T-cell (primary cell): ENCODE measurements at regions of chr15 and their contacts with region 1.

Region 1: DNA sequence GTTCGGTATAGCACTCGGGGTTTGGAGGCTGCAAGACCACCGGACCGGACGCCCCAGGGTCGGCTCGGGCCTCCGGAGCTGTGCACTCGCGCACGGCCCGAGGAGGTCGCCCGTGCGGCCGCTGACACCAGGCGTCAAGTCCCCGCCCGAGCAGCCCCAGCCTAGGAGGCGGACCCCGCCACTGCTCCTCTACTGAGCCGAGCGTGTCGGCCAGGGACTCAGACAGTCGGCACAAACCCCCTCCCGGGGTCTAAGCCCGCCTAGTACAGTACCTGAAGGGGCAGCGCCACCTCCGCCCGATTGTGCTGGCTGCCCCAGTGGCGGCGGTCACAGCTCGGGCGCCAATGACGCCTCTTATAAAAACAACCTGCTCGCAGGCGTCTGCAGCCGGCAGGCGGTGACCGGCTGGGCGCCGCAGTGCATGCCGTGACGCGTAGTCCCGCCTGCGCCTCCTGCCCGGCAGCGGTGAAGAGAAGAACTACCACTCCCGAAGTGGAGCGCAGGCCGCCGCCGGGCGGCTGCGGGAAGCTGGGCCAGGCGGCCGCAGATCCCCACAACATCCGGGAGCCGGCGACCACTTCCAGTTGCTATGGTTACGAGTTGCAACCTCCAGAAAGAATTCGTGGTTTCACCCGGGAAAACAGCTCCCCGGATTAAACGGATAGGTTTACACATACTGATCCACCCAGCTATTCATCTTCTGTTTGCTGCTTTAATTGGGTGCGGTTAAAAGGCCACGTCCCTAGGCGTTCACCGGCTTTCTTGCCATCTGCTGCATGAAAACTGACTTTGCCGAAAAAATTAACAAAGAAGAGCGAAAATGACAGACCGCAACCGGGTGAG is at the starts of genes CCPG1 and PIERCE2:
- DNase-seq: peak; percentile 72 to 92 (median 80)
- ATAC-seq: peak; percentile 93 to 97 (median 95)
- H3K4me3 ChIP-seq: peak within 1 kb of the TSS; percentile 79 to 88
- H3K4me3 Mint-ChIP-seq: peak within 1 kb of the TSS; percentile 84 to 96 (median 91)
- H3K27ac ChIP-seq: peak within 1 kb of the TSS; percentile 79
- H3K27ac Mint-ChIP-seq: peak within 1 kb of the TSS; percentile 84 to 89
- H3K4me1 ChIP-seq: peaks cover 5 to 30% of the 10 kb centered on the region in 2 experiments
- H3K4me1 Mint-ChIP-seq: peaks cover 33 to 39% (median 38%) of the 10 kb centered on the region in 3 donors
- H3K27me3 ChIP-seq: no peaks in the 10 kb centered on the region
- H3K27me3 Mint-ChIP-seq: no peaks in the 10 kb centered on the region
- total RNA-seq, gene CCPG1: 21.3 to 32.5 (median 25.6) TPM
- total RNA-seq, gene PIERCE2: not detected

Region 2: GRCh38 chr15:55344206-55344605 is 64.0 kb before region 1 on chr15:
- CTCF ChIA-PET with region 1: interaction called in 1 of 2 experiments, 3 read pairs
- POLR2A ChIA-PET with region 1: interaction called in 1 of 2 experiments, 11 read pairs
- DNase-seq: no peak
- ATAC-seq: no peak
- H3K4me3 ChIP-seq: no peak overlapping the region
- H3K4me3 Mint-ChIP-seq: no peak overlapping the region
- H3K27ac ChIP-seq: no peak overlapping the region
- H3K27ac Mint-ChIP-seq: peak overlapping the region; percentile 17 to 35
- H3K4me1 ChIP-seq: no peaks in the 10 kb centered on the region
- H3K4me1 Mint-ChIP-seq: no peaks in the 10 kb centered on the region
- H3K27me3 ChIP-seq: no peaks in the 10 kb centered on the region
- H3K27me3 Mint-ChIP-seq: no peaks in the 10 kb centered on the region

Region 3: DNA sequence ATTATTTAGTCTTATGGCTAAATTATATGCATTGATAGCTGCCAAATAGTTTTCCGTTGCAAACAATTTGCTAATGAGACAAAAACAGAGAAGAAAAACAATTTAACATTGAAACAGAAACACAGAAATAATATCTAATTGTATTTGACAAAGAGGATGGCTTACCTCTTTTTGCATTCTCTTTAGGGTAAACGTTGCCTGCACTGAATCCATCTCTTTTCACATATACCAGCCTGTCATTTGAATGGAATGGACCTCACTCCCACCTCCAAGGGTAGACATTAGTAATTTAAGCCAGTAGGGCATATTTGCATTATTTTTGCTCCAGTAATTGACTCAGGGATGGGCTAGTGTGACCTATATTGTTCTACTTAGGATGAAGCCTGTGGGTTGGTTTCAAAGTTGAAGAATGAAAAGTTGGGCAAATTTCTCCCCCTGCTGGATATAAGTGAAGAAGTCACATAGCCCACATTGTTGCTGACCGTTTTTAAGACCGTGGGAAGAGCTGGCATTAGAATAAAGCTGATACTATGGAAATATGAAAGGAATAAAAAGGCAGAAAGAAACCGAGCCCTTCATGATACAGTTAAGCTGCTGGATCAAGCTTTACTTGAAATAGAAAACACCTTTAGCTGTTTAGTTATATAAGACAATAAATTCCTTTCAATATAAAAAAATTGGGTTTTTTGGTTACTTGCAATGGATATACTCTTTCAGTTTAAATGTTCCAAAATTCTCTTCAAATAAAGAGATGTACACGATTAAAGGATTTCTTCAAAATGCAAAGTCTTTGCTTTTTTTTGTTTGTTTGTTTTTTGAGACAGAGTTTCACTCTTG is 27.0 kb after region 1 on chr15:
- CTCF ChIA-PET with region 1: interaction called, 5 to 15 read pairs
- POLR2A ChIA-PET with region 1: interaction called in 1 of 2 experiments, 3 read pairs
- DNase-seq: peak in 3 of 35 experiments; percentile 3 to 63 (median 10)
- ATAC-seq: peak; percentile 43 to 67 (median 58)
- H3K4me3 ChIP-seq: no peak overlapping the region
- H3K4me3 Mint-ChIP-seq: no peak overlapping the region
- H3K27ac ChIP-seq: no peak overlapping the region
- H3K27ac Mint-ChIP-seq: no peak overlapping the region
- H3K4me1 ChIP-seq: no peaks in the 10 kb centered on the region
- H3K4me1 Mint-ChIP-seq: peaks cover 6 to 8% (median 6%) of the 10 kb centered on the region in 3 donors
- H3K27me3 ChIP-seq: no peaks in the 10 kb centered on the region
- H3K27me3 Mint-ChIP-seq: no peaks in the 10 kb centered on the region

Region 4: GRCh38 chr15:56040081-56041035 is 632.2 kb after region 1 on chr15:
- CTCF ChIA-PET with region 1: no interaction called
- POLR2A ChIA-PET with region 1: interaction called in 1 of 2 experiments, 11 read pairs
- DNase-seq: peak in 1 of 35 experiments; percentile 29
- ATAC-seq: no peak
- H3K4me3 ChIP-seq: no peak overlapping the region
- H3K4me3 Mint-ChIP-seq: no peak overlapping the region
- H3K27ac ChIP-seq: no peak overlapping the region
- H3K27ac Mint-ChIP-seq: no peak overlapping the region
- H3K4me1 ChIP-seq: peaks cover 19 to 20% of the 10 kb centered on the region in 2 experiments
- H3K4me1 Mint-ChIP-seq: peaks cover 45 to 60% (median 47%) of the 10 kb centered on the region in 3 donors
- H3K27me3 ChIP-seq: no peaks in the 10 kb centered on the region
- H3K27me3 Mint-ChIP-seq: no peaks in the 10 kb centered on the region